CD4-positive, alpha-beta T cell (primary cell): ENCODE measurements at regions of chr19 and their contacts with region 1.

Region 1: DNA sequence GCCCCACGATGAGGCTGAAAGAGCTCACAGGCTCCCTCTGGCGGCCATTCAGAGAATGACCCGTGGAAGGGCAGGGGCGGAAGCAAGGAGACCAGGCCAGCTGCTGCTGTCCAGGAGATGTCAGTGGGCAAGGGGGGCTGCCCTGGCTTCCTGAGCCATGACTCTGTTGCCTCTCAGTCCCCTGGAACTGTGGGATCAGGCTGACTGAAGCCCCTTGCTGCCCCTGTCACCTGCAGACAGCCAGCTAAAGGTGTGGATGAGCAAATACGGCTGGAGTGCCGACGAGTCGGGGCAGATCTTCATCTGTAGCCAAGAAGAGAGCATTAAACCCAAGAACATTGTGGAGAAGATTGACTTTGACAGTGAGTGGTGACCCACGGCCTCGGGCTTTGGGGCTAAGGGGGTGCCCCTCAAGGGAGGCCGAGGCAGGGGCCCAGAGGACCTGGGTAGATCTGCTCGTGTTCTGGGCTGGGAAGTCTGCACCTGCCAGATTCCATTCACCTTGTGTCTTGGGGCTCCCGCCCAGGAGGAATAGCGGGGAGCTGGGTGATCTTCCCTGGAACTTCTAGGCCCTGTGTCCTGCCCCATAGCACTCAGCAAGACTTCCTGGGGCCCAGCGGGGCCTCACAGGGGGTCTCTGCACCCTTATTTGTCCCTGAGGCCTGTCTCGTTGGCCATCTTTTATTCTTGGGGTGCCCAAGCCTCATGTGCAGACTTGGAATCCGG is 12.5 kb upstream of the ACTN4 start:
- DNase-seq: peak; percentile 60 to 84 (median 67)
- ATAC-seq: no peak
- H3K4me3 ChIP-seq: no peak overlapping the region
- H3K4me3 Mint-ChIP-seq: peak overlapping the region; percentile 11
- H3K27ac ChIP-seq: no peak overlapping the region
- H3K27ac Mint-ChIP-seq: peak overlapping the region; percentile 74
- H3K4me1 ChIP-seq: peaks cover 28% of the 10 kb centered on the region
- H3K4me1 Mint-ChIP-seq: peaks cover 35% of the 10 kb centered on the region
- H3K27me3 ChIP-seq: no peaks in the 10 kb centered on the region
- H3K27me3 Mint-ChIP-seq: no peaks in the 10 kb centered on the region
- CTCF ChIP-seq: peak; percentile 95

Region 2: GRCh38 chr19:38115271-38115802 is 519.6 kb before region 1 on chr19:
- CTCF ChIA-PET with region 1: no interaction called
- POLR2A ChIA-PET with region 1: no interaction called
- intact Hi-C with region 1: no loop called
- DNase-seq: peak in 2 of 14 experiments; percentile 1 to 4
- ATAC-seq: no peak
- H3K4me3 ChIP-seq: no peak overlapping the region
- H3K4me3 Mint-ChIP-seq: no peak overlapping the region
- H3K27ac ChIP-seq: no peak overlapping the region
- H3K27ac Mint-ChIP-seq: no peak overlapping the region
- H3K4me1 ChIP-seq: peaks cover 14% of the 10 kb centered on the region
- H3K4me1 Mint-ChIP-seq: peaks cover 9% of the 10 kb centered on the region
- H3K27me3 ChIP-seq: no peaks in the 10 kb centered on the region
- H3K27me3 Mint-ChIP-seq: no peaks in the 10 kb centered on the region
- CTCF ChIP-seq: no peak

Region 3: GRCh38 chr19:38544034-38544958 is 90.6 kb before region 1 on chr19:
- CTCF ChIA-PET with region 1: interaction called, 5 read pairs
- POLR2A ChIA-PET with region 1: interaction called, 7 read pairs
- intact Hi-C with region 1: loop called (anchors 1 kb)
- DNase-seq: peak in 5 of 14 experiments; percentile 12 to 85 (median 75)
- ATAC-seq: peak; percentile 92
- H3K4me3 ChIP-seq: no peak overlapping the region
- H3K4me3 Mint-ChIP-seq: no peak overlapping the region
- H3K27ac ChIP-seq: no peak overlapping the region
- H3K27ac Mint-ChIP-seq: peak overlapping the region; percentile 0
- H3K4me1 ChIP-seq: peaks cover 24% of the 10 kb centered on the region
- H3K4me1 Mint-ChIP-seq: peaks cover 24% of the 10 kb centered on the region
- H3K27me3 ChIP-seq: no peaks in the 10 kb centered on the region
- H3K27me3 Mint-ChIP-seq: no peaks in the 10 kb centered on the region
- CTCF ChIP-seq: peak; percentile 81

Region 4: DNA sequence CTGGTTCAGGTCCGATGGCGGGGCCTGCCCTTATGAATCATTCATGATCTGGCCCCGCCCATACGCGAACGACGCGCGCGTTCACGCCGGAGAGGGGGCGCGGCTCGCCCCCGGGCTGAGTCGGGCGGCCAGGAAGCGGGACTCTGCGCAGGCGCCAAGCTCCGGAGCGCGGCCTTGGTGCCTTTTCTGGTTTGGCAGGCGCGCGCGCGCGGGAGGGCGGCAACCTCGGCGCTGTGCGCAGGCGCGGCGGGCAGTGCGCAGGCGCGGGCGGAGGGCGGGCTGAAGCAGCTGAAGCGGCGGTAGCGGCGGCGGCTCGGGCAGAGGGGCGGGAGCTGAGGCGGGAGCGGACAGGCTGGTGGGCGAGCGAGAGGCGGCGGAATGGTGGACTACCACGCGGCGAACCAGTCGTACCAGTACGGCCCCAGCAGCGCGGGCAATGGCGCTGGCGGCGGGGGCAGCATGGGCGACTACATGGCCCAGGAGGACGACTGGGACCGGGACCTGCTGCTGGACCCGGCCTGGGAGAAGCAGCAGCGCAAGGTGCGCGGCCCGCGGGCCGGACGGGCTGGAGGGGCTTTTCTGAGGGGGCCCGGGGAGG is 12.5 kb after region 1 on chr19 and contains the start of gene ACTN4:
- CTCF ChIA-PET with region 1: interaction called, 13 read pairs
- POLR2A ChIA-PET with region 1: interaction called, 16 read pairs
- intact Hi-C with region 1: no loop called
- DNase-seq: peak; percentile 99 to 100 (median 100)
- ATAC-seq: peak; percentile 92
- H3K4me3 ChIP-seq: peak within 1 kb of the TSS; percentile 96
- H3K4me3 Mint-ChIP-seq: peak within 1 kb of the TSS; percentile 85
- H3K27ac ChIP-seq: peak within 1 kb of the TSS; percentile 21 to 41
- H3K27ac Mint-ChIP-seq: peak within 1 kb of the TSS; percentile 75
- H3K4me1 ChIP-seq: peaks cover 50% of the 10 kb centered on the region
- H3K4me1 Mint-ChIP-seq: peaks cover 37% of the 10 kb centered on the region
- H3K27me3 ChIP-seq: peaks cover 3 to 9% of the 10 kb centered on the region in 2 experiments
- H3K27me3 Mint-ChIP-seq: peaks cover 37% of the 10 kb centered on the region
- CTCF ChIP-seq: no peak
- total RNA-seq, gene ACTN4: 70.3 to 84.0 TPM

Region 5: GRCh38 chr19:38666663-38667511 is 32.0 kb after region 1 on chr19:
- CTCF ChIA-PET with region 1: interaction called, 9 read pairs
- POLR2A ChIA-PET with region 1: no interaction called
- intact Hi-C with region 1: loop called in 1 of 2 experiments (anchors 1 kb)
- DNase-seq: peak in 6 of 14 experiments; percentile 25 to 77 (median 55)
- ATAC-seq: peak; percentile 66
- H3K4me3 ChIP-seq: no peak overlapping the region
- H3K4me3 Mint-ChIP-seq: peak overlapping the region; percentile 52
- H3K27ac ChIP-seq: peak overlapping the region in 1 of 2 donors; percentile 2
- H3K27ac Mint-ChIP-seq: peak overlapping the region; percentile 59
- H3K4me1 ChIP-seq: peaks cover 93% of the 10 kb centered on the region
- H3K4me1 Mint-ChIP-seq: peaks cover 83% of the 10 kb centered on the region
- H3K27me3 ChIP-seq: peaks cover 0 to 3% of the 10 kb centered on the region in 2 experiments
- H3K27me3 Mint-ChIP-seq: peaks cover 29% of the 10 kb centered on the region
- CTCF ChIP-seq: no peak